Endothelial cell of umbilical vein (primary cell): ENCODE measurements at regions of chr19 and their contacts with region 1.

Region 1: DNA sequence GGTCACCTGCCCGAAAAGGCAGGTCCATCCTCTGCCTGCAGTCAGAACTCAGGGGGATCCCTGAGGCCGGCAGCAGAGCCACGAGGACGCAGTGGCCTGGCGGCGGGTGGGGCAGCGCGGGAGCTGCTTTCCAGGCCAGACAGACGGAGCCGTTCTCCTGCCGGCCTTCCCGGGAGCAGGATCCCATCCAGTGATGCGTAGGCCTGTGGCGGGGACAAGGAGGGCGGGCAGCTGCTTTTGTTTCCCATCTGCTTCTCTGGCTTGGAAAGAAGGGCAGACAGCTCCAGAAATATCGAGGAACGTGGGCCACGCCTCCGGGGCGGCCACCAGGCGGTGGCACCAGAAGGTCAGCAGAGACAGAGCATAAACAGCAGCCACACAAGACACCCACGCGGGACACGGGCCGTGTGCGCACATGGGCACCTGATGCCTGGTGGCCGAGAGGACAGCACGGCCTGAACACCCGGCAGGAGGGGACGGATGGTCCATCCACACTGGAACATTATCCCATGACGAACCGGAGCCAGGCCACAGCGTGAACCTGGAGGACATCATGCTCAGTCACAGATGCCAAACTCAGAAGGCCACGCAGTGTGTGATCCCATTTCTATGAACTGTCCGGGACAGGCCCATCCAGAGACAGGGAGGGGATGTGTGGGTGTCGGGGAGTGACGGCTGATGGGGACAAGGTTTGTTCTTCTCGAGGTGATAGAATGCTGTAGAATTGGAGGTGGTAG is 13.9 kb upstream of the MKNK2 start:
- DNase-seq: no peak
- H3K4me3 ChIP-seq: no peak overlapping the region
- H3K27ac ChIP-seq: no peak overlapping the region
- H3K4me1 ChIP-seq: peaks cover 18% of the 10 kb centered on the region
- H3K27me3 ChIP-seq: no peaks in the 10 kb centered on the region
- CTCF ChIP-seq: no peak
- POLR2A ChIP-seq: no peak

Region 2: GRCh38 chr19:1929021-1929742 is 135.8 kb before region 1 on chr19:
- CTCF ChIA-PET with region 1: interaction called, 26 read pairs
- POLR2A ChIA-PET with region 1: no interaction called
- dilution Hi-C with region 1: no loop called
- intact Hi-C with region 1: loop called (anchors 1 kb)
- DNase-seq: peak; percentile 64
- H3K4me3 ChIP-seq: peak overlapping the region in 2 of 3 experiments; percentile 23 to 26
- H3K27ac ChIP-seq: no peak overlapping the region
- H3K4me1 ChIP-seq: peaks cover 4% of the 10 kb centered on the region
- H3K27me3 ChIP-seq: no peaks in the 10 kb centered on the region
- CTCF ChIP-seq: peak; percentile 82 to 97
- POLR2A ChIP-seq: no peak

Region 3: GRCh38 chr19:2016041-2016807 is 48.7 kb before region 1 on chr19:
- CTCF ChIA-PET with region 1: interaction called, 75 read pairs
- POLR2A ChIA-PET with region 1: no interaction called
- dilution Hi-C with region 1: no loop called
- intact Hi-C with region 1: loop called (anchors 1 kb)
- DNase-seq: peak; percentile 42
- H3K4me3 ChIP-seq: peak overlapping the region in 1 of 3 experiments; percentile 22
- H3K27ac ChIP-seq: no peak overlapping the region
- H3K4me1 ChIP-seq: no peaks in the 10 kb centered on the region
- H3K27me3 ChIP-seq: no peaks in the 10 kb centered on the region
- CTCF ChIP-seq: no peak
- POLR2A ChIP-seq: no peak

Region 4: DNA sequence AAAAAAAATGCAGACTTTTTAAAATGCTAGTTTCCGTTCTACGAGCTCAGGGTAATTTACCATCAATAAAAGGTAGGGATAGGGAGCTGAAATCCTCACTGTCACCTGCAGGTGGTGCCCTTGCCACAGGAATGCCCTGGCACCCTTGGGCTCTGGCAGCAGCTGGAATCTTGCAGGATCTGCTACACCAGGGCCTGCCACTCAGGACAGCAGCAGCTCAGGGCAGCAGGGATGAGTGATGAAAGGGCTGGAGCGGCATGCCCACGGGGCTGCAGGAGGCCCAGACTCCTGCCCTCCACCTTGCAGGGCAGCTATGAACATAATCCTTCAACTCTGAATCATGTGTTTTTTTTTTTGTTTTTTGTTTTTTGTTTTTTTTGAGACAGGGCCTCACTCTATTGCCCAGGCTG is 583.6 kb after region 1 on chr19:
- CTCF ChIA-PET with region 1: no interaction called
- POLR2A ChIA-PET with region 1: no interaction called
- dilution Hi-C with region 1: no loop called
- intact Hi-C with region 1: no loop called
- DNase-seq: peak; percentile 72
- H3K4me3 ChIP-seq: no peak overlapping the region
- H3K27ac ChIP-seq: no peak overlapping the region
- H3K4me1 ChIP-seq: no peaks in the 10 kb centered on the region
- H3K27me3 ChIP-seq: peaks cover 0 to 3% of the 10 kb centered on the region in 2 experiments
- CTCF ChIP-seq: peak; percentile 73 to 87
- POLR2A ChIP-seq: no peak